IMR-90 (cell line): ENCODE measurements at regions of chr20 and their contacts with region 1.

Region 1: DNA sequence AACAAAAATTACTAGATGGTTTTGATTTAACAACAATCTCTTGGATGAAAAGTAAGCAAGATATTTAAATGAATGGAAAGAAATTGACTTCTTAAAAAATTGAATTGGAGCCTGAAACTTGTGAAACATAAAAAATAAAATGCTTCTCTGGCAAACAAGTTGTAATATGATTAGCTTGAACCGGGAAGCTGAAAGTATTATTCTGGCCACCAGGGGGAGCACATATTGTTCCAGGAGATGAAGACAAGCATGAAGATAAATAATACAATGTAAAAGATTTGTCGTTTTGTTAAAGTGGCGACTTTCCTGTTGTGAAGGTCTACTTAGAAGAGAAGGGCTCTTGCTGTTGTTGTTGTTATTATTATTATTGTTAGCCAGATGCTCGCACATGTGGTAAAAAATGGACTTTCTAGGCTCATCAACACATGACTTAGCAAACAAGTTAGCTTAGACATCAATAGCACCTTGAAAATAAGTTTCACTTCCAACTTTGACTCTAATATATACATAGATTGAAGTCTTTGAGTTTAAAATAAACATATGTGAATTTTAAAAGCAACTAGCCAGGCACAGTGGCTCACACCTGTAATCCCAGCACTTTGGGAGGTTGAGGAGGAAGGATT is 14.2 kb downstream of the PAX1 start:
- DNase-seq: peak; percentile 47
- ATAC-seq: 0 out of 2 replicates have a peak, but pooled peaks have one; percentile 44
- H3K4me3 ChIP-seq: no peak overlapping the region
- H3K27ac ChIP-seq: no peak overlapping the region
- H3K4me1 ChIP-seq: no peaks in the 10 kb centered on the region
- H3K27me3 ChIP-seq: peaks cover 9% of the 10 kb centered on the region; the same call in 1 of the 2 replicates
- CTCF ChIP-seq: peak; percentile 62
- POLR2A ChIP-seq: no peak
- RAD21 ChIP-seq: peak; percentile 26; the same call in 1 of the 2 replicates

Region 2: GRCh38 chr20:21981597-21982344 is 262.1 kb after region 1 on chr20:
- CTCF ChIA-PET with region 1: no interaction called
- POLR2A ChIA-PET with region 1: no interaction called
- dilution Hi-C with region 1: no loop called
- in situ Hi-C with region 1: no loop called
- intact Hi-C with region 1: no loop called
- DNase-seq: no peak
- ATAC-seq: no peak
- H3K4me3 ChIP-seq: no peak overlapping the region
- H3K27ac ChIP-seq: no peak overlapping the region
- H3K4me1 ChIP-seq: no peaks in the 10 kb centered on the region
- H3K27me3 ChIP-seq: no peaks in the 10 kb centered on the region
- CTCF ChIP-seq: no peak
- POLR2A ChIP-seq: no peak
- RAD21 ChIP-seq: no peak

Region 3: GRCh38 chr20:22312744-22313346 is 593.1 kb after region 1 on chr20:
- CTCF ChIA-PET with region 1: interaction called, 4 read pairs
- POLR2A ChIA-PET with region 1: no interaction called
- dilution Hi-C with region 1: no loop called
- in situ Hi-C with region 1: loop called (anchors 25 kb)
- intact Hi-C with region 1: loop called (anchors 1 kb)
- DNase-seq: peak; percentile 25
- ATAC-seq: no peak
- H3K4me3 ChIP-seq: no peak overlapping the region
- H3K27ac ChIP-seq: no peak overlapping the region
- H3K4me1 ChIP-seq: no peaks in the 10 kb centered on the region
- H3K27me3 ChIP-seq: no peaks in the 10 kb centered on the region
- CTCF ChIP-seq: peak; percentile 73
- POLR2A ChIP-seq: no peak
- RAD21 ChIP-seq: peak; percentile 59